Body of pancreas (tissue), 4 donors: ENCODE measurements at regions of chr1 and their contacts with region 1.

Region 1: DNA sequence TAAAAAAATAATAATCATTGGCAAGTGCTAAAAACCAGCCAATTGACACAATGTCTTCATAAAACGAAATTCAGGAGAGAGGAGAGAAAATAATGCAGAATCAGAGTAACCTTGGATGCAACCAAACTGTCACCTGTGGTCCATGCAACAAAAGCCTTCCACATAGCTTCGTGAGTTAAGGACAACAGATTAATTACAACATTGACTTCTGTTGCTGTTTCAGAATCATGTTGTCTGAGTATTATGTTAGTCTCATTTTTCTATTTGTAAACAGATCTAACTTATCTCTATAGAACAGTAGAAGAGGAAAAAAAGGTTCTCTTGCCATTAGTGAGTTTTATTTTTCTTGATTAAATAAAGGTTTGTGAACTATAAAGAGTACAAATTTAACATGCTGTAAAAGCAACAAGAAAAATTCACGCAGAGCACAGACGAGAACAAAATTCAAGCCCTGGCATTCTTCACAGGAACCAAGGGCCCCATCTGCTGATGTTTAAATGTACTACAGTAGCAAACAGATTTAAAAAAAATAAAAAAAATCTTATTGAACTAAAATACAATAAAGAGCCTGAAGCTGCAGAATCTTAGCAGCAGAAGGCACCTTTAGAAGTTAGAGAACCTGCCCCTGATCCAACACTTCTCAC is 381.1 kb upstream of the PKN2 start:
- DNase-seq: peak; percentile 14 to 47 (median 38)
- ATAC-seq: peak; percentile 74
- H3K4me3 ChIP-seq: no peak overlapping the region
- H3K27ac ChIP-seq: no peak overlapping the region
- H3K4me1 ChIP-seq: no peaks in the 10 kb centered on the region
- H3K27me3 ChIP-seq: no peaks in the 10 kb centered on the region
- CTCF ChIP-seq: peak; percentile 21 to 81 (median 71)
- POLR2A ChIP-seq: no peak

Region 2: GRCh38 chr1:88180449-88181108 is 122.4 kb before region 1 on chr1:
- intact Hi-C with region 1: loop called (anchors 5 kb)
- DNase-seq: peak; percentile 74 to 81 (median 79)
- ATAC-seq: peak; percentile 88
- H3K4me3 ChIP-seq: no peak overlapping the region
- H3K27ac ChIP-seq: no peak overlapping the region
- H3K4me1 ChIP-seq: peaks cover 15% of the 10 kb centered on the region
- H3K27me3 ChIP-seq: no peaks in the 10 kb centered on the region
- CTCF ChIP-seq: peak; percentile 78 to 96 (median 90)
- POLR2A ChIP-seq: no peak